Activated T-helper 2 cell treated with anti-CD3 and anti-CD28 coated beads, Interferon-gamma antibody, Interleukin-2, Interleukin-4, amounts not matched to agents 10 μg/mL and 5 μg/mL and 100 μg/mL, durations not matched to agents 14 hours and 24 hours and 36 hours (primary cell): ENCODE measurements at regions of chr11 and their contacts with region 1.

Region 1: GRCh38 chr11:9506489-9507276 is 45.9 kb downstream of the ZNF143 start:
- DNase-seq: peak; percentile 58
- H3K4me3 Mint-ChIP-seq: no peak overlapping the region
- H3K27ac Mint-ChIP-seq: no peak overlapping the region
- H3K4me1 Mint-ChIP-seq: peaks cover 16% of the 10 kb centered on the region
- H3K27me3 Mint-ChIP-seq: no peaks in the 10 kb centered on the region

Region 2: DNA sequence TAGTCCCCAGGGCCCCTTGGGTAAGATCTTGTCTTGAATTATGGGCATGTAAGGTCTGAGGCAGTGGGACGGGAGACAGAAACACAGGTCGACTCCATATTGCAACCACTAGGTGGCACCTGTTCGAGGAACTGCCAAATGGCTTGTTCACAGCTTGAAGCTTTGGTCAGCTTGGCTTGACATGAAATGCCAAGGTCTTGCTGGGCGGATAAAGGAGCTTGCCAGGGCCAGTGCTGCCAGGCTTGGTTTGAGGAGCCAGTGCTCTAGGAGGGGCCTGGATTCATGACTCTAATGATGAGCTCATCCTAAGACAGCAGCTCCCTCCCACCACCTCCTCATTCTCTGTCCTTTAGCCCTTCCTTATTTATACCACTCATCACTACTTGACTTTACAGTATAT is 491.0 kb before region 1 on chr11:
- intact Hi-C with region 1: loop called (anchors 10 kb)
- DNase-seq: peak; percentile 47
- H3K4me3 Mint-ChIP-seq: no peak overlapping the region
- H3K27ac Mint-ChIP-seq: no peak overlapping the region
- H3K4me1 Mint-ChIP-seq: peaks cover 23% of the 10 kb centered on the region
- H3K27me3 Mint-ChIP-seq: peaks cover 20% of the 10 kb centered on the region

Region 3: DNA sequence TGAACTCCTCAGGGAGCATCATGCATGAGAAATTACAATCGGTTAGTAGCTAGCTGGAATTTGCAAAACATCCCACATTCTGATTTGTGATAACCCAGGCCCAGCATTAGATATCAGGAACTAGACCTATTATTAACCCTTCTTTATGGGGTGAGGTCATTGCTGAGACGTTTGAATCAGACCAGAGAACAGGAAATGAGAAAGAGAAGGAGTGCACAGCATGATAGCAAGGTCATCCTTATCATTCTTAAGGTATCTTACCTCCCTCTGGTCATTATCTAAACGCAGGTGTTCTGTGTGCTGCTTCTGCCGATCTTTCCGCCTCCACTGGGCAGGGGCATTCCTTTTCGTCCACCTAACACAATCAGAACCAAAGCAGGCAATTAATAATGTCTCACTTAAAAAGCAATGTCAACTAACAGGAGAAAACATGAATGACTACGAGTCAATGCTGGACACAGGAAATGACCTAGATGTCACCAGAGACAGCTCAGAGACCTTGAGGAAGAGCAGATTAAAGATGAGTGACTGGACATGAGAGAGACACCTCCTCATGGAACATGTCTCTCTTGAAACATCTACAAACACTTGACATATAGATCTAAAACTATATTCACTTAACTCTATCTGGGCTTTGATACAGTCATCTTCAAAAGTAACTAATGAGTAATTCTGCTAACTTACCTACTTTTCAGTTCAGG is 336.9 kb before region 1 on chr11:
- intact Hi-C with region 1: loop called (anchors 5 kb)
- DNase-seq: no peak
- H3K4me3 Mint-ChIP-seq: no peak overlapping the region
- H3K27ac Mint-ChIP-seq: peak overlapping the region; percentile 30
- H3K4me1 Mint-ChIP-seq: peaks cover 28% of the 10 kb centered on the region
- H3K27me3 Mint-ChIP-seq: no peaks in the 10 kb centered on the region

Region 4: GRCh38 chr11:9448576-9449352 is 57.9 kb before region 1 on chr11:
- intact Hi-C with region 1: loop called (anchors 10 kb)
- DNase-seq: no peak
- H3K4me3 Mint-ChIP-seq: no peak overlapping the region
- H3K27ac Mint-ChIP-seq: no peak overlapping the region
- H3K4me1 Mint-ChIP-seq: peaks cover 17% of the 10 kb centered on the region
- H3K27me3 Mint-ChIP-seq: no peaks in the 10 kb centered on the region

Region 5: DNA sequence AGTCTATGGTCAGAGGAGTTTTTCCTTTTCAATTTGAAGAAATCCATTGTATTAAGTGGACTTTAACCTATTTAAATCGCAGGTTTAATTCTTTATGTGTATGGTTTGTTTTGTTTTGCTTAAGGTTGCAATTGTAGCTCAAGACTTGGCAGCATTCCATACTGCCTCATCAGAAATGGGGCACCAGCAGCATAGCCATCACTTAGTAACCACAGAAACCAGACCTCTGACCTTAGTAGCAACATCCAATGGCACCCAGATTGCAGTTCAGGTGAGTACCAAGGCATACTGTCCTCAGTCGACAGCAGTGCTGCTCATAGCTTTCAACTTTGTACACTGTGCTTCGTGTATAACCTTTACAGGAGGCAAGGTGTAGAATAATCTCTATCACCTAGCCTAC is 18.4 kb after region 1 on chr11:
- intact Hi-C with region 1: no loop called
- DNase-seq: no peak
- H3K4me3 Mint-ChIP-seq: no peak overlapping the region
- H3K27ac Mint-ChIP-seq: no peak overlapping the region
- H3K4me1 Mint-ChIP-seq: no peaks in the 10 kb centered on the region
- H3K27me3 Mint-ChIP-seq: no peaks in the 10 kb centered on the region

Region 6: DNA sequence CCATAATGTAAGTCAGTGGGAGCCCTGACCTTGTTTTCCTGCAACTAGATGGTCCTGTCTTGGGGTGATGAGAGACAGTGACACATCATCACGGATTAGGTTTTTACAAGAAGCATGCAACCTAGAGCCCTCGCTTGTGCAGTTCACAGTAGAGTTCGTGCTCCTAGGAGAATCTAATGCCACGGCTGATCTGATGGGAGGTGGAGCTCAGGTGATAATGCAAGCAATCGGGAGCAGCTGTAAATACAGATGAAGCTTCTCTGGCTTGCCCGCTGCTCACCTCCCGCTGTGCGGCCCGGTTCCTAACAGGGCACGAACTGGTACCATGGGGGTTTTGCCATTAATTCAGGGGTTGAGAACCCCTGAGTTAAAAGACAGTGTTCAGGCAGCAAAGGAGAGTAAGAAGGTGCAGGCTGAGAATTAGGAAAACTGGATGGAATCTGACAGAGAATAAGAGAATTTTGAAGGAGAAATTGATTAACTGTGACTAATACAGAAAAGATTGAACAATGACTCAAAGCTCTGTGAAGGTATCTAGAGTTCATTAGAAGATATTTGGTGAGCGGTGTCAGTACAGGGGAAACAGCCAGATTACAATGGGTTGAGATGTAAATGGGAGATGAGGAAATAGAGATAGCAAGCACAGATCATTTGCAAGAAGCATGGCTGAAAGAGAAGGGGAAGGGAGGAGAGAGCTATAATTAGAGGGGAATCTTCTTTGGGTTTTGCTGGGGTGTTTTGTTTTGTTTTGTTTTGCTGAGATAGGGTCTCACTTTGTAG is 87.8 kb after region 1 on chr11:
- intact Hi-C with region 1: no loop called
- DNase-seq: no peak
- H3K4me3 Mint-ChIP-seq: no peak overlapping the region
- H3K27ac Mint-ChIP-seq: no peak overlapping the region
- H3K4me1 Mint-ChIP-seq: no peaks in the 10 kb centered on the region
- H3K27me3 Mint-ChIP-seq: no peaks in the 10 kb centered on the region

Region 7: GRCh38 chr11:9626496-9627394 is 120.1 kb after region 1 on chr11:
- intact Hi-C with region 1: no loop called
- DNase-seq: no peak
- H3K4me3 Mint-ChIP-seq: no peak overlapping the region
- H3K27ac Mint-ChIP-seq: no peak overlapping the region
- H3K4me1 Mint-ChIP-seq: peaks cover 5% of the 10 kb centered on the region
- H3K27me3 Mint-ChIP-seq: peaks cover 18% of the 10 kb centered on the region